ENCODE measurements at regions of chrX and their contacts with region 1.

Region 1: DNA sequence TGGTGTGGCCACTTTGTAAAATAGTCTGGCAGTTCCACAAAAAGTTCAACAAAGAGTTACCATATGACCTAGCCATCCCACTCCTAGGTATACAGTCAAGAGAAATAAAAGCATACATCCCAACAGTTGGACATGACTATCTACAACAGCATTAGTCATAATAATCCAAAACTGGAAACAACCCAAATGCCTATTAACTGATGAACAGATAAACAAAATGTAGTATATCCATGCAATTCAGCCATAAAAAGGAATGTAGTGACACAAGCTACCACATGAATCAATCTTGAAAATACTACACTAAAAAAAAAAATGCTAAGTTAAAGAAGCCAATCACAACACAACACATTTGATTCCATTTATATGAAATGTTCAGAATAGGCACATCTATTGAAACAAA is 16.1 kb downstream of the MED14 start:
- H3K4me3 Mint-ChIP-seq: no peak overlapping the region
- H3K27ac Mint-ChIP-seq: no peak overlapping the region
- H3K4me1 Mint-ChIP-seq: peaks cover 16% of the 10 kb centered on the region
- H3K27me3 Mint-ChIP-seq: no peaks in the 10 kb centered on the region

Region 2: DNA sequence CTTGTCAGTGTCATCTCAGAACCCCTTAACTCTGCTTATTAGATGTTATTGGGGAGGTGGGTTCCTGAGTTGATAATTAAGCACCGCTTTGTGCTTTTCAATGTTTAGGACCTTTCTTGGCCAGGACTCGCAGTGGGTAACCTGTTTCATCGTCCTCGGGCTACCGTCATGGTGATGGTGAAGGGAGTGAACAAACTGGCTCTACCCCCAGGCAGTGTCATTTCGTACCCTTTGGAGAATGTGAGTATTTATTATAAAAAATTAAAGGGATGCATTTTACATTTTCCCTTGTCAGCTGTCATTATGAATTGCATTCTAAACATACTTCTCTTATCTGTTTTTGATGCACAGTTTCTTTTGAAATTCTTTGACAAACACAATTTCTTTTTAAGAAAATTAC is 128.1 kb before region 1 on chrX:
- intact Hi-C with region 1: loop called (anchors 10 kb)
- H3K4me3 Mint-ChIP-seq: no peak overlapping the region
- H3K27ac Mint-ChIP-seq: no peak overlapping the region
- H3K4me1 Mint-ChIP-seq: peaks cover 9% of the 10 kb centered on the region
- H3K27me3 Mint-ChIP-seq: no peaks in the 10 kb centered on the region

Region 3: DNA sequence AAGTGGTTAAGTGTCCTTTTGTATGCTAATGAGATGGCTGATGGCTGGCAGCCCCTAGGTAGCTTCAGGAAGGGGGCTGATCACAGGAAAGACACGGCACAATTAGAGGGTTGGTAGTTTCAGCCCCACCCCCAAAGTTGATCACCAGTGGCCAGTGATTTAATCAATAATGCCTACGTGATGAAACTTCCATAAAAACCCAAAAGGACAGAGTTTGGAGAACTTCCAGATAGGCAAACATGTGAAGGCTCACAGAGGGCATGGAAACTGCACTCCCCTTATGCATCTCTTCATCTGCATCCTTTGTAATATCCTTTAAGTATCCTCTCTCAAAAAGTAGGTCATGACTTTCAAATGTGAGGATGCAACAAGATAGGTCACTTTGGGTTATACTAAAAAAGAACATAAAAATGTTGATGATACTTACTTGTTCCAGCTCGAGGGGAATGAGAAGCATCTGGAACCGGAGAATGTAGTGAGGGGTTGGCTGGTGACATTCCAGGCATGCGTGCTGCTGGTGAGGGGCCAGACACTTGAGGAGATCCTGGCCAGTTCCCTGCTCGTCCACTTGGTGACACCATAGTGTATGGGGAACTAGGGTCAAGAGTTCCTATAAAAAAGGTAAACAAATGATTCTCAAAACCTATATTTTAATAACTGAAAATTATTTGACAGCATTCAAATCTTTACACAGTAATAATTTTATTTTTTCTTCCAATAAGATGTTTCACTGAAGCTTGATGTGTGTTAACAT is 55.2 kb before region 1 on chrX:
- intact Hi-C with region 1: loop called (anchors 10 kb)
- H3K4me3 Mint-ChIP-seq: no peak overlapping the region
- H3K27ac Mint-ChIP-seq: no peak overlapping the region
- H3K4me1 Mint-ChIP-seq: peaks cover 19% of the 10 kb centered on the region
- H3K27me3 Mint-ChIP-seq: no peaks in the 10 kb centered on the region